Vagina (tissue), 2 donors: ENCODE measurements at regions of chr12 and their contacts with region 1.

Region 1: GRCh38 chr12:117836999-117837736 is 131.6 kb downstream of the KSR2 start:
- DNase-seq: no peak
- H3K4me3 ChIP-seq: no peak overlapping the region
- H3K27ac ChIP-seq: no peak overlapping the region
- H3K4me1 ChIP-seq: no peaks in the 10 kb centered on the region
- H3K27me3 ChIP-seq: no peaks in the 10 kb centered on the region
- CTCF ChIP-seq: peak; percentile 82 to 88 (median 84)
- POLR2A ChIP-seq: no peak

Region 2: GRCh38 chr12:117212563-117213190 is 624.5 kb before region 1 on chr12:
- intact Hi-C with region 1: loop called (anchors 5 kb)
- DNase-seq: no peak
- H3K4me3 ChIP-seq: no peak overlapping the region
- H3K27ac ChIP-seq: no peak overlapping the region
- H3K4me1 ChIP-seq: no peaks in the 10 kb centered on the region
- H3K27me3 ChIP-seq: no peaks in the 10 kb centered on the region
- CTCF ChIP-seq: peak; percentile 63 to 88 (median 72)
- POLR2A ChIP-seq: no peak

Region 3: DNA sequence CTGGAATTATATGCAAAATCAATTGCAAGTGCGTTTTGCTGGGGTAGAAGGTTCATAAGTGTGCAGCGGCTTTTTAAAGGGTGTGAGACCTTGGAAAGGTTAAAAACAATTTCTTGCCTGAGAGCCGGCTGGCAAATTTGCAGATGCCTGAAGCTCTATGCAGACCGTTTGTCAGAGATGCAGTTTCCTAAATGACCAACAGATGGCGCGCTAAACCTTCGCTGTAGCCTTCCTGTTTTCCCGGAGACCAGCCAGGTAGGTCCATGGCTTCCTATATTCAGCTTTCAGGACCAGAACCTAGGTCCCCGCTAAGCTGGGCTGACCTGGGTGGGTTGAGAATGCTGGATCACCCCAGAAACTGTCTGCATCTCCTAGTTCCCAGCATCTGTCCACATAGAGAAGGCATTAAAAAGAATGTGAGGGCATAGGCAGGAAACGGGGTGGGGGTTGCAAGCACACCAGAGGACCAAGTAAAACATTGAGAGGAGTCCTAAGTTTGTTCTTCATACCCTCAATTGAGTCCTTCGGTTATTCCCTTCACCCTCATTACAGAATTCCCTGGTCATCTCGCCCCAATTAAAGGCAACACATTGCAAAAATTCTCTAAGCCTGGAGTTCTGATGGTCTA is 470.0 kb before region 1 on chr12:
- intact Hi-C with region 1: loop called (anchors 5 kb)
- DNase-seq: no peak
- H3K4me3 ChIP-seq: no peak overlapping the region
- H3K27ac ChIP-seq: no peak overlapping the region
- H3K4me1 ChIP-seq: no peaks in the 10 kb centered on the region
- H3K27me3 ChIP-seq: no peaks in the 10 kb centered on the region
- CTCF ChIP-seq: peak; percentile 66 to 84 (median 70)
- POLR2A ChIP-seq: no peak

Region 4: GRCh38 chr12:117622087-117622486 is 215.1 kb before region 1 on chr12:
- intact Hi-C with region 1: no loop called
- DNase-seq: no peak
- H3K4me3 ChIP-seq: no peak overlapping the region
- H3K27ac ChIP-seq: no peak overlapping the region
- H3K4me1 ChIP-seq: no peaks in the 10 kb centered on the region
- H3K27me3 ChIP-seq: no peaks in the 10 kb centered on the region
- CTCF ChIP-seq: no peak
- POLR2A ChIP-seq: no peak

Region 5: GRCh38 chr12:117850048-117850447 is 12.9 kb after region 1 on chr12:
- intact Hi-C with region 1: no loop called
- DNase-seq: no peak
- H3K4me3 ChIP-seq: no peak overlapping the region
- H3K27ac ChIP-seq: no peak overlapping the region
- H3K4me1 ChIP-seq: no peaks in the 10 kb centered on the region
- H3K27me3 ChIP-seq: no peaks in the 10 kb centered on the region
- CTCF ChIP-seq: peak; percentile 20 to 60 (median 37)
- POLR2A ChIP-seq: no peak

Region 6: GRCh38 chr12:117900561-117900960 is 63.4 kb after region 1 on chr12:
- intact Hi-C with region 1: no loop called
- DNase-seq: no peak
- H3K4me3 ChIP-seq: no peak overlapping the region
- H3K27ac ChIP-seq: no peak overlapping the region
- H3K4me1 ChIP-seq: no peaks in the 10 kb centered on the region
- H3K27me3 ChIP-seq: no peaks in the 10 kb centered on the region
- CTCF ChIP-seq: no peak
- POLR2A ChIP-seq: no peak

Region 7: GRCh38 chr12:118135788-118136558 is 298.8 kb after region 1 on chr12 and contains the start of gene PEBP1:
- intact Hi-C with region 1: no loop called
- DNase-seq: peak in 1 of 2 donors; percentile 93
- H3K4me3 ChIP-seq: peak within 1 kb of the TSS; percentile 77 to 85
- H3K27ac ChIP-seq: peak within 1 kb of the TSS; percentile 87
- H3K4me1 ChIP-seq: peaks cover 46% of the 10 kb centered on the region
- H3K27me3 ChIP-seq: no peaks in the 10 kb centered on the region
- CTCF ChIP-seq: peak in 1 of 3 experiments; percentile 7
- POLR2A ChIP-seq: peak in 1 of 2 donors; percentile 87
- total RNA-seq, gene PEBP1: 167 TPM